ENCODE measurements at regions of chr14 and their contacts with region 1.

Region 1: DNA sequence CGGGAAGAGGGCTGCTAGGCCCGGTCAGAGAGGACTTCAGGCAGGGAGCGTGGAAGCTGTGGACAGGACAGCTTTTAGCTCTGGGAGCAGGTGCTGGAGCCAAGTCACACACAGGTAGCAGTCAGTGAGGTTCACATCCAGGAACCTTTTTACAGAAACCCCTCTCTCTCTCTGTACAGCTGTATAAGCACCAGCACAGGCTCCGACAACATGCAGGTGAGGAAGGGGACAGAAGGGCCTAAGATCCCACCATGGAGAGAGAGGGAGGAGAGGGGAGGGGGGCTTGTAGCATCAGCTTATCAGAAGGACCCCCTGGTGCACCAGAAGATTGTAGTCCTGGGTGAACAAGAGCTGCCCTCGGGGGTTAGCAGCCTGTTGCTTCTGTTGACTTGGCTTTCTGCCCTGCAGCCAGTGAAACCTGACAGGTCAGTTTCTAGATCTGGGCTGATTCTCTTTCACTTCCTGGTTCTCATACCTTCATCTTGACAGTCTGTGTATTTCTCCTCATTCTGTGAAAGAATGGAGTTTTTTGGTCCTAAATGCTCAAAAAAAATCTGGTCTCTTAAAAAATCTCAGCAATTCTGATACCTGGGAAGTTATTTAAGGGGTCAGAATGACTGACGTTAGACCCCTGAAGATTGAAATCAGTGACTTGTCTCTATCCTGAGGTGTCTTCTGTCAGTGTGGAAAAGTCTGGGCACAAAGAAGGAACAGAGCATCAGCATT is 23.6 kb downstream of the TTC9 start:
- DNase-seq: peak; percentile 71
- CTCF ChIP-seq: no peak

Region 2: GRCh38 chr14:70655110-70655826 is 10.1 kb before region 1 on chr14:
- CTCF ChIA-PET with region 1: interaction called, 10 read pairs
- POLR2A ChIA-PET with region 1: no interaction called
- DNase-seq: peak; percentile 74
- CTCF ChIP-seq: no peak